Posterior vena cava (tissue), 2 donors: ENCODE measurements at regions of chr19 and their contacts with region 1.

Region 1: DNA sequence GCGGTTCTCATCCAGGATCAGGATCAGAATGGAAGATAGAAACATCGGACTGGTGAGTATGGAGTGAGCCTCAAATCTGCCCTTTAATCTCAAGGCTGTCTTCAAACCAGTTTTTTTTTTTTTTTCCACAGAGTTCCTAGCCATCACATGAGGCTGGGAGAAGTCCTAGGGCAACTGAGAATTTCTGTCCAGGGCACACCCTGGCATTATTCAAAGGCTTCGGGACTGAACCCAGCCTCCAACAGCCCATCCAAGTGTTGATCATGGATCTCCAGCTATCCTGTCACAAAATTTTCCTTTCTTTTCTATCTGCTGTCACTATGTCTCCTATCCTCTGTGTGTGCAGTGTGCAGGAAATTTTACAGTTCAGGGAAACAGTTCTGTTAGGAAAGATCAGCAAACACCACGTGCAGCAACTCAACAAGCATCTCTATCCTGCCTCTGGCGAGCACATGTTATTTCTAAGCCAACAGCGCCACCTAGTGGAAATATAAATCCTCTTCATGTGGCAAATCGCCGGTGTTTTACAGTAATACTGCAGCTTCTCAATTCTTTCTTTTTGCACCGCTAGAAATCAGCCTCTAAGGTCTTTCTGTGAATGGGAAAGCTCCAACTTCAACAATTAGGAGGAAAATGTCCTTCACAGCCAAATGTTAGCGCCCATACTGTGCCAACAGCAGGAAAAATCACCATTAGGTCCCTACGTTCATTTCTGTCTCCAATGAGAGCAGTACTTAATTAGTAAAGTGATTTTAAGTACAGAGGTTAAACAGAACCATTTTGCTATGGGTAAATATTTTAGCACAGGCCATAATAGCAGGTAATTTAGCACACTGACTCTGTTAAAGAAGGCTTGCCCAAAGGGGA is 21.4 kb upstream of the ZNF181 start:
- DNase-seq: no peak

Region 2: GRCh38 chr19:34639491-34640085 is 73.0 kb before region 1 on chr19:
- intact Hi-C with region 1: loop called in 1 of 2 experiments (anchors 5 kb)
- DNase-seq: no peak

Region 3: DNA sequence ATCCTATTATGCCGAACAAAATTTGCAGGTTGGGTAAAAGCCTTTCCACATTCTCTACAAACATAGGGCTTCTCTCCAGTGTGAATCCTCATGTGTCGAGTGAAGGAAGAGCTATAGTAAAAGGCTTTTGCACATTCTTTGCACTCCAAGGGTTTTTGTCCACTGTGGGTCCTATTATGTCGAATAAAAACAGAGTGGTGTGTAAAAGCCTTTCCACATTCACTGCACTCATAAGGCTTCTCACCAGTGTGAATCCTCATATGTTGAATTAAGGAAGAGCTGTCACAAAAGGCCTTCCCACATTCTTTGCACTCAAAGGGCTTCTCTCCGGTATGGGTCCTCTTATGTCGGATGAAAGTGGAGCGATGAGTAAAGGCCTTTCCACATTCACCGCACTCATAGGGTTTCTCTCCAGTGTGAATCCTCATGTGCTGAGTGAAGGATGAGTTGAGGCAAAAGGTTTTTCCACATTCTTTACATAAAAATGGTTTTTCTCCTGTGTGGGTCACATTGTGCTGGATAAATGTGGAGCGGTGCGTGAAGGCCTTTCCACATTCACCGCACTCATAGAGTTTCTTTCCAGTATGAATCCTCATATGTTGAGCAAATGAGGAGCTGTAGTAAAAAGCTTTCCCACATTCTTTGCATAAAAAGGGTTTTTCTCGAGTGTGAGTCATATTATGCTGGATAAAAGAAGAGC is 46.7 kb after region 1 on chr19:
- intact Hi-C with region 1: no loop called
- DNase-seq: no peak

Region 4: DNA sequence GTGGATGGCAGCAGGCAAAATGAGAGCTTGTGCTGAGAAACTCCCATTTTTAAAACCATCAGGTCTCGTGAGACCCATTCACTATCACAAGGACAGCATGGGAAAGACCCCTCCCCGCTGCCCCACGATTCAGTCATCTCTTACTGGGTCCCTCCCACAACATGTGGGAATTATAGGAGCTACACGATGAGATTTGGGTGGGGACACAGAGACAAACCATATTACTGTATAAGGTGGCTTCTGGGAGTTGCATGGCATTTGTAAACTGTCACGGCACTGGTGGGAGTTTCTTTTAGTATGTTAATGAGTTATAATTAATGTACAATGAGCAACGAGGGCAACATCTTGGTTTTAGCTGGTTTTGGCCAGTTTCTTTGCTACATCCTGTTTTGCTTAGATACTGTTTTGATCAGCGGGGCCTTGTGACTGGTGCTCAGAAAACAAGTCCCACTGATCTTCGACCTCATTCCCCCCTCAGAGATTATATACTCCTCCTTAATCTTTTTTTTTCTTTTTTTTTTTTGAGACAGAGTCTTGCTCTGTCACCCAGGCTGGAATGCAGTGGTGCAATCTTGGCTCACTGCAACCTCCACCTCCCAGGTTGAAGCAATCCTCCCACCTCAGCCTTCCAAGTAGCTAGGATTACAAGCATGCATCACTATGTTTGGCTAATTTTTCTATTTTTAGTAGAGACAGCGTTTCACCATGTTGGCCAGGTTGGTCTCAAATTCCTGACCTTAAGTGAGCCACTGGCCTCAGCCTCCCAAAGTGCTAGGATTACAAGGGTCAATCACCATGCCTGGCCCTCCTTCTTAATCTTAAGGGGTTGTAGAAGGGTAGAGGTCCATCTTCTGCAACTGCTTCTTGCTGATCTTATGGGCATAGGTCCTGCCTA is 81.7 kb after region 1 on chr19:
- intact Hi-C with region 1: no loop called
- DNase-seq: no peak